Common myeloid progenitor, CD34-positive (primary cell): ENCODE measurements at regions of chr3 and their contacts with region 1.

Region 1: GRCh38 chr3:25648107-25648535 is 16.6 kb downstream of the TOP2B start:
- DNase-seq: peak; percentile 86 to 92 (median 87)
- H3K4me3 ChIP-seq: no peak overlapping the region
- H3K27ac ChIP-seq: no peak overlapping the region
- H3K4me1 ChIP-seq: peaks cover 0 to 7% (median 2%) of the 10 kb centered on the region in 4 experiments
- H3K27me3 ChIP-seq: no peaks in the 10 kb centered on the region

Region 2: GRCh38 chr3:25633919-25634318 is 14.2 kb before region 1 on chr3:
- CTCF ChIA-PET with region 1: interaction called, 22 read pairs
- POLR2A ChIA-PET with region 1: no interaction called
- DNase-seq: no peak
- H3K4me3 ChIP-seq: no peak overlapping the region
- H3K27ac ChIP-seq: no peak overlapping the region
- H3K4me1 ChIP-seq: no peaks in the 10 kb centered on the region
- H3K27me3 ChIP-seq: no peaks in the 10 kb centered on the region

Region 3: DNA sequence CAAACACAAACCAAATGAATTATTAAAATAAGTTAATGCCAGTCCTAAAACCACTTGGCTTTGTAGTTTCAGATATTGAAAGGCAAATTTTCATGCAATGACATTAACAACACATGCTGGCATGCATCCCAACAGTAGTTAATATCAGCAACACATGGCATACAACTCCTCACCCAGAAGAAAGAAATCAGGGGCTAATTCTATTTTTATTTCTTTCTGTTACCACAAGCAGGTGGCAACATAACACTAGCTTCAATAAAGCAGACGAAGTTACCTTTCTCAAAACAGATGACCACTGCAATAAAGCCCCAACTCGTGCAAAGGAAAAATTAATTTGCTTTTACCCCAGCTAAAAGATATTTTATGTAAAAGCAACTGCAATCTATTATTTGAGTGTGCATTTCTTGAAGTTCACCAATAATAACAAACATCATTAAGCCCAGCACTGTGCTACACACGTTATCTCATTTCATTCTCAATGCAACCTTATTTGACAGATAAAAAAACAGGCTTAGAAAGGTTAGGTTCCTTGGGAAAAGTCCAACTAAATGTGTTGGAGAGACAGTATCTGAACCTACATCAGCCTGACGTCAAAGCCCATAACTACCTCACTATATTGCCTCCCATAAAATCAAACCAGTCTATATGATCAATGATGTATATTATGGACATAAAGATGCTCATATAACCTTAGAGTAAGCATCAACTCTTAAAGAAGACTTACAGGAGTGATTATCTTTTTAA is 13.7 kb after region 1 on chr3:
- CTCF ChIA-PET with region 1: interaction called, 17 read pairs
- POLR2A ChIA-PET with region 1: interaction called, 3 read pairs
- DNase-seq: peak in 2 of 3 donors; percentile 39 to 43
- H3K4me3 ChIP-seq: peak overlapping the region in 6 of 7 experiments; percentile 90 to 99 (median 94)
- H3K27ac ChIP-seq: peak overlapping the region; percentile 90 to 95
- H3K4me1 ChIP-seq: peaks cover 34 to 65% (median 47%) of the 10 kb centered on the region in 4 experiments
- H3K27me3 ChIP-seq: no peaks in the 10 kb centered on the region

Region 4: GRCh38 chr3:25751725-25752124 is 103.6 kb after region 1 on chr3:
- CTCF ChIA-PET with region 1: no interaction called
- POLR2A ChIA-PET with region 1: no interaction called
- DNase-seq: no peak
- H3K4me3 ChIP-seq: no peak overlapping the region
- H3K27ac ChIP-seq: no peak overlapping the region
- H3K4me1 ChIP-seq: no peaks in the 10 kb centered on the region
- H3K27me3 ChIP-seq: no peaks in the 10 kb centered on the region

Region 5: GRCh38 chr3:25831578-25831977 is 183.5 kb after region 1 on chr3:
- CTCF ChIA-PET with region 1: interaction called, 16 read pairs
- POLR2A ChIA-PET with region 1: no interaction called
- DNase-seq: peak; percentile 52 to 65 (median 63)
- H3K4me3 ChIP-seq: no peak overlapping the region
- H3K27ac ChIP-seq: no peak overlapping the region
- H3K4me1 ChIP-seq: peaks cover 0 to 12% (median 6%) of the 10 kb centered on the region in 4 experiments
- H3K27me3 ChIP-seq: no peaks in the 10 kb centered on the region

Region 6: DNA sequence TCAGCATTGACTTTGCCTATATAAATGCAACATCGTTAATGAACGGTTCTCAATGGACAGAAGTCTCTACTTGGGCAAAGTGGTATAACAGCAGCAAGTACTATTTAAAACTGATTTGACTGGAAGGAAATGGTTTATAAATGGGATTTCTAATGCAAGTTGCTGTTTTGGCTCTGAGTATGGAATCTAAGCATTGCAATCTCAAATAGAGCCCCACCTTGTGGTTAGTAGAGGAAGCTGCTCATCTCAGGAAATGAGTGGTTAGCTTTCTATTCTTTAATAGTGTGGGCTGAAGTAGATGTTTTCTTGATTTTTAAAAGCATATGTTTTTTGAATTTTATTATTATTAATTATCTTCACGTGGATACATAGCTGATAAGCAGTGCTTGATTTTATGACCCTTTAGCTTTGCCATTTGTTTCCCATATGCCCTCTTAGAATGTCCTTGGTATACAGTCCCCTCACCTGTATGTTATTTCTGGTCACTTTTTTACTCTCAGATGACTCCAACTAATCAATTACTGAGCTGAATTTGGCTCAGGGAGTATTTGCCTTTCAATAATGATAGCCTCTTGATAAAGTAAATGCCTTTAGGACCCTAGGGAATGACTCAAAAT is 208.9 kb after region 1 on chr3:
- CTCF ChIA-PET with region 1: interaction called, 76 read pairs
- POLR2A ChIA-PET with region 1: no interaction called
- DNase-seq: peak; percentile 45 to 69 (median 68)
- H3K4me3 ChIP-seq: no peak overlapping the region
- H3K27ac ChIP-seq: no peak overlapping the region
- H3K4me1 ChIP-seq: no peaks in the 10 kb centered on the region
- H3K27me3 ChIP-seq: no peaks in the 10 kb centered on the region